Activated T-helper 1 cell treated with anti-CD3 and anti-CD28 coated beads, Interleukin-12 subunit alpha, Interleukin-12 subunit beta, Interleukin-2, Interleukin-4 antibody, amounts not matched to agents 30 ng/mL and 10 ng/mL and 1 ng/mL, durations not matched to agents 14 hours and 24 hours and 36 hours (primary cell): ENCODE measurements at regions of chr3 and their contacts with region 1.

Region 1: DNA sequence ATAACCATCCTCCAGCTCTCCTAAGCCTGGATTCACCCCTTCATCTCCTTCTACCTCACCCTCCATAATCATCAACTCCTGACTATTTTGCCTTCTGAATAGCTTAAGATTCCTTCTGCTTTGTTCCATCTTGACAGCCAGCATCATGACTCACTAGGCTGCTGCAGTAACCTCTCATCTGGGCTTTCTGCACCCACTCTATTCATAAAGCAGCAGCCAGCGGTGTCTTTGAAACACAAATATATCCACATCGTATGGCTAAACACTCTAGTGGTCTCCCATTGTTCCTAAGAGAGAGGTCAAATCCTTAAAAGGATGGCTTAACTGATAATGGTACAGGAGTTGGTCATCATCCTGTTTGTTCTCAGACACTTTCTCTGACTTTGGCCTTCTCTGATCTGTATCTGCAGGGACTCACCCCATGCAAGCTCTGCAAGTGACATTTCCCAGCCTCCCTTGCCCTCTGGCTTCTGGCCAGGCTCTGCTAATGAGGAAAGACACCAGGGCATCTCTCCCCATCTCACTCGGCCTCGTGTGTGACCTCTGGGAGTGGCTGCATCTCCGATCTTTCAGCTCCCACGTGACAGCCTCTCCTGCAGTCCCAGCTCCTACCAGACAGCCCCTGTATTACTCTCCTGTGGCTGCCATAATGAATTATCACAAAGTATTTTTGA is 6.2 kb downstream of the GRK7 start:
- DNase-seq: no peak
- H3K4me3 Mint-ChIP-seq: no peak overlapping the region
- H3K27ac Mint-ChIP-seq: no peak overlapping the region
- H3K4me1 Mint-ChIP-seq: peaks cover 10% of the 10 kb centered on the region
- H3K27me3 Mint-ChIP-seq: peaks cover 14% of the 10 kb centered on the region

Region 2: GRCh38 chr3:141746962-141747361 is 22.4 kb before region 1 on chr3:
- intact Hi-C with region 1: loop called (anchors 2 kb)
- DNase-seq: no peak
- H3K4me3 Mint-ChIP-seq: no peak overlapping the region
- H3K27ac Mint-ChIP-seq: no peak overlapping the region
- H3K4me1 Mint-ChIP-seq: peaks cover 13% of the 10 kb centered on the region
- H3K27me3 Mint-ChIP-seq: no peaks in the 10 kb centered on the region

Region 3: GRCh38 chr3:141887051-141887450 is 117.7 kb after region 1 on chr3:
- intact Hi-C with region 1: no loop called
- DNase-seq: no peak
- H3K4me3 Mint-ChIP-seq: no peak overlapping the region
- H3K27ac Mint-ChIP-seq: no peak overlapping the region
- H3K4me1 Mint-ChIP-seq: peaks cover 50% of the 10 kb centered on the region
- H3K27me3 Mint-ChIP-seq: no peaks in the 10 kb centered on the region